MCF 10A (cell line): ENCODE measurements at regions of chr10 and their contacts with region 1.

Region 1: GRCh38 chr10:26334932-26335573 is 103.1 kb upstream of the APBB1IP start:
- DNase-seq: peak; percentile 66
- H3K4me3 Mint-ChIP-seq: no peak overlapping the region
- H3K27ac Mint-ChIP-seq: no peak overlapping the region
- H3K4me1 Mint-ChIP-seq: no peaks in the 10 kb centered on the region
- H3K27me3 Mint-ChIP-seq: peaks cover 36% of the 10 kb centered on the region
- CTCF ChIP-seq: peak; percentile 87

Region 2: DNA sequence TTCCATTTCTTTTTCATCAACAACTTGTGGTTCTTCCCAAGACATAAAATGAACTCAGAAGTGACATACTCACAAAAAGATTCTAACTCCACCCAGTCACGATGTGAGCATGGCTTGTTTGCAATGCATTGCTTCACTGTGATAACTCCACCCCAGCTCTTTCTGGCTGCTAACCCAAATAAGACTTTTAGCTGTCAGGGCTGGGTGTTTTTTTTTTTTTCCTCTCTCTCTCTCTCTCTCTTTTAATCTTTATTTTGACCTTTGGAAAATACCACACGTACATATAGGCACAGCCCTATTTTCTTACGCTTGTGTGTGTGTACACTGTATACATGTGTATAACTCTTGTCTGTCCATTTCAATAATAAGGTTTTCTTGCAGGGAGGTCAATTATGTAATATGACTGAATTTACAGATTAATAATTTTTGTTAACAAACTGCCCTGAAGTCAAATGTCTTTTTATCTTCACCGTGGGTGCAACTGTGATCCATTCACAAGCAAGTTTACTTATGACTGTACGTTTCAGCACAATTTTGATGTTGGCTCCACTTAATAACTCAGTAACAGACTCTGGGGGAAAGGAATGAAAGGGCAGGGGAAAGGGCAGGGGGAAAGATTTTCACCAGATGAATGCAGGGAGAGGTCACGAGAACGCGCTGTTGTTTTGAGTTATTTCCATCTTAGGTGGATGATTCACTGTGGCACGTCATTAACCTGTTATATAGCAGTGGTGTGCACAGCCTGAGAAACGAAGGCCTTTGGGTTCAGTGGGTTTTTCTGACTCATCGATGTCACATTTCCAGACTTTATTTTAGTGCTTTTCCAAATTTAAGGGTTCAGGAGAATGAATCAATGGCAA is 152.2 kb after region 1 on chr10:
- CTCF ChIA-PET with region 1: no interaction called
- POLR2A ChIA-PET with region 1: no interaction called
- intact Hi-C with region 1: loop called (anchors 5 kb)
- DNase-seq: peak; percentile 88
- H3K4me3 Mint-ChIP-seq: peak overlapping the region; percentile 66
- H3K27ac Mint-ChIP-seq: peak overlapping the region; percentile 94
- H3K4me1 Mint-ChIP-seq: peaks cover 28% of the 10 kb centered on the region
- H3K27me3 Mint-ChIP-seq: no peaks in the 10 kb centered on the region
- CTCF ChIP-seq: no peak

Region 3: DNA sequence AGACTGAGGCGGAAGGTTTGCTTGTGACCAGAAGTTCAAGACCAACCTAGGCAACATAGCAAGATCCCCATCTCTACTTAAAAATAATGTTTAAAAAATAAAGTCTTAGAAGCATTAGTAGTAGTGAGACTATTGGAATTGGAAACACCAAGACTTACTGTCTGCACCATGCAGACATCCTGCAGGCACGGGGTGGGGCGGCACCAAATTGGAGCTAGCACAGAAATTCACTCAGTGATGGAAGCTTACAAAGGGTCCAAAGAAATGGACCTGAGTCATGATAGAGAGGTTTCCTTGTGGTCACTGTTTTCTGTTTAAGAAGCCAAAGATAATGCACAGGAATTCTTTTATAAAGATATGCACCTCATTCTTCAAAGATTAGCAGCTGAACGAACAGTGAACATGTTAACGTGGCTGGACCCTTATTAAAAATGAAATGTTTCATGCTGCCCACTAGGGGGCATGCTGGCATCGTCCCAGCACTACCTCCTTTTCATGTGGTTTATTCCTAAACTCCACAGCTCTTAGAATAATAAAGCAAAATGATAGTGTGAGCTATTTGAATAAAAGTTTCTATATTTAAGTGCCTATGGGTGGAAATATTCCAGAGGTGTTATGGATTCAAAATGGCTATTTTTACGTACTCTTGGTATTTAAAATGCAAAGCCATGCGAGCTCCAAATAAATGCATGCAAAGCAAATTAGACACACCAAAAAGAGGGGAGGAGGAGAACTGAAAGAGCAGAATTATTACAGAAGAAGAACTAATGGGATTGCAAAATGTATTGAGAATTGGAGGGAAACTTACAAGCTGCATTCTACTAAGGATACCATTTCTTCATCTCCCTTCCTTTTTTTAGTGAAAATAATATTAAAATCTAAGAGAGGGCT is 391.0 kb after region 1 on chr10:
- CTCF ChIA-PET with region 1: no interaction called
- POLR2A ChIA-PET with region 1: no interaction called
- intact Hi-C with region 1: loop called (anchors 2 kb)
- DNase-seq: peak; percentile 63
- H3K4me3 Mint-ChIP-seq: no peak overlapping the region
- H3K27ac Mint-ChIP-seq: no peak overlapping the region
- H3K4me1 Mint-ChIP-seq: no peaks in the 10 kb centered on the region
- H3K27me3 Mint-ChIP-seq: no peaks in the 10 kb centered on the region
- CTCF ChIP-seq: peak; percentile 48